ENCODE measurements at regions of chr14 and their contacts with region 1.

Region 1: GRCh38 chr14:33792720-33793368 is 158.0 kb downstream of the EGLN3 start:
- DNase-seq: peak; percentile 58
- H3K4me3 ChIP-seq: no peak overlapping the region
- H3K27ac ChIP-seq: no peak overlapping the region
- H3K4me1 ChIP-seq: no peaks in the 10 kb centered on the region
- CTCF ChIP-seq: peak; percentile 97

Region 2: DNA sequence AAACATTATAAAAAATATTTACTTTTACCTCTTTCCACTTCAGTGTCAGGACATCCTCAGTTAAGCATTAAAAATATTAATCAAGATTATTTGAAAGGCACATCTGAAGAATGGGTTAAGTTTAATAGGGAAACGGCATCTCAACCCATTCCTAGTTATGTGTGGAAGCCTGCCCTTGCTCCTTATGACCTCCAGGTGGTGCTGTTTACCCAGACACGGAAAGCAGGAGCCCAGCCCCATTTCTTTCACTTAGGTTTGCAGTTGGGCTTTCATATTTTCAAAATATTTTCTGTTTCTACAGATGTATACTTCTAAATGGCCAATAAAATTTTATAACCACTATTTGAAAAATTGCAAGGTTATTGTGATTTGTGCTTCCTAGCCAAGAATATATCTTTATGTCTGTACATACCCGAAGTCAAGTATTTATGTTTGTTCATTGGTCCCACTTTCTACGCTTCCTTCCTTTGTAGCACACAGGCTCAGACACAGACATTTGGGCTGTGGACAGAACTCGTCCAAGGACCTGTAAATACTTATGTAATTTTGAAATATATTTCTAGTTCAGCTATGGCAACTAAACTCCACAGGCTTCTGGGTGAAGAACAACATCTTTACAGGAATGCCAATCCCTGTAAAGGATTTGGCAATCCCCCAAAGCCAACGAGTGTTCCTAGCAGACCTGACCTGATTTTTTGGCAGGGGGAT is 1216.6 kb before region 1 on chr14:
- CTCF ChIA-PET with region 1: no interaction called
- POLR2A ChIA-PET with region 1: no interaction called
- intact Hi-C with region 1: loop called (anchors 2 kb)
- DNase-seq: peak; percentile 51
- H3K4me3 ChIP-seq: no peak overlapping the region
- H3K27ac ChIP-seq: no peak overlapping the region
- H3K4me1 ChIP-seq: no peaks in the 10 kb centered on the region
- CTCF ChIP-seq: peak; percentile 98

Region 3: GRCh38 chr14:32710731-32711680 is 1081.8 kb before region 1 on chr14:
- CTCF ChIA-PET with region 1: no interaction called
- POLR2A ChIA-PET with region 1: no interaction called
- intact Hi-C with region 1: loop called (anchors 5 kb)
- DNase-seq: peak; percentile 60
- H3K4me3 ChIP-seq: no peak overlapping the region
- H3K27ac ChIP-seq: no peak overlapping the region
- H3K4me1 ChIP-seq: no peaks in the 10 kb centered on the region
- CTCF ChIP-seq: peak; percentile 88

Region 4: GRCh38 chr14:33475623-33476022 is 317.2 kb before region 1 on chr14:
- CTCF ChIA-PET with region 1: no interaction called
- POLR2A ChIA-PET with region 1: no interaction called
- intact Hi-C with region 1: loop called (anchors 10 kb)
- DNase-seq: peak; percentile 11
- H3K4me3 ChIP-seq: no peak overlapping the region
- H3K27ac ChIP-seq: no peak overlapping the region
- H3K4me1 ChIP-seq: no peaks in the 10 kb centered on the region
- CTCF ChIP-seq: peak; percentile 67

Region 5: DNA sequence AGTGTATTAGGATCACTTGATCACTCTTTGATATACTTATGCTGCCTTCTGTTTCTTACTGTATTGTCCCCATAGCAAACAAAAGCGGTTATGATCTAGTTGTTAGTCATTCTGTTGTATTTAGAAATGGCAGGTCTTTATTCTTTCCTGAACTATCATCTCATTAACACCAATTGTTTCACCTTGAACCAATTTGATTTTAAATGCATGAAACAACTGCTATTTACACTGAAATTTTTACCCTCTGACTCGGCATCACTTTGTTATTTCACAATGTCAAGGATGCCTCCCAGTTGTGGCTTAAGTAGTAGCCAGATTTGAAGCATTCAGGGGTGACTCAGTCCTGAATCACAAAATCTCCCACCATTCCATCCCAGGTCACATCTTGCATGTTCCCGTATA is 145.5 kb before region 1 on chr14:
- CTCF ChIA-PET with region 1: no interaction called
- POLR2A ChIA-PET with region 1: no interaction called
- intact Hi-C with region 1: no loop called
- DNase-seq: no peak
- H3K4me3 ChIP-seq: no peak overlapping the region
- H3K27ac ChIP-seq: no peak overlapping the region
- H3K4me1 ChIP-seq: no peaks in the 10 kb centered on the region
- CTCF ChIP-seq: no peak

Region 6: DNA sequence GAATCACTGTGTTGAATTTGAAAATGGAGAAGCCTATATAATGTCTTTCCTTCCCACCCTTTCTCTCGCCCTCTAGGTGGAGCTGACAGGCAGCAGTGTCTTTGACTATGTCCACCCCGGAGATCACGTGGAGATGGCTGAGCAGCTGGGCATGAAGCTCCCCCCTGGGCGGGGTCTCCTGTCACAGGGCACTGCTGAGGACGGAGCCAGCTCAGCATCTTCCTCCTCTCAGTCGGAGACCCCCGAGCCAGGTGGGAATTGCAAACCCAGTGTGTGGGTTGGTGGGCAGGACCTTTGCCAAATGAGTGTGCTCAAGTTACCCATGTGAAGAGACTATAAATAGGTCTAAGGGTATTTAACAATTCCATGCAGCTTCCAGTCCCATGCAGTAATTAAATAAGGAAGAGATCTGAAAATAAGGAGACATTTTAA is 116.7 kb before region 1 on chr14:
- CTCF ChIA-PET with region 1: no interaction called
- POLR2A ChIA-PET with region 1: no interaction called
- intact Hi-C with region 1: loop called (anchors 5 kb)
- DNase-seq: no peak
- H3K4me3 ChIP-seq: no peak overlapping the region
- H3K27ac ChIP-seq: no peak overlapping the region
- H3K4me1 ChIP-seq: no peaks in the 10 kb centered on the region
- CTCF ChIP-seq: peak; percentile 52; the same call in 1 of the 2 replicates

Region 7: DNA sequence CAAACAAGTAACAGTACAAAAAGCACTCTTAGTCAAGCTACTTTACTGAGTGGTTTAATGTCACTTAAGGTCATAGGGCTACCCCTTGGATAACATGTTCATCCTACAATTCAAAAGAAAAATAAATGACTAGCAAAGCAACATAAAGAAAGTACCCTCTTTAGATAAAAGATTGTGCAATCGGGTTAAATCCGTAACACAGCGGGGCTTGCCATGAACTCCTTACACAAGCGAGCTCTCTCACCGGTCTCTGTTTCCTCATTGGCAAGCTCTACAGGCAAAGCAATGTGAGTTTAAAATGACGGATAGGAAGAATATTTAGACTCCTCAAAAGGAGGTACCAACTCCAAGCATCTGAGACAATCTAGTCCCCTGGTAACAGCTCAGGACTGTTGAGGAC is 17.5 kb after region 1 on chr14:
- CTCF ChIA-PET with region 1: no interaction called
- POLR2A ChIA-PET with region 1: no interaction called
- intact Hi-C with region 1: no loop called
- DNase-seq: no peak
- H3K4me3 ChIP-seq: no peak overlapping the region
- H3K27ac ChIP-seq: no peak overlapping the region
- H3K4me1 ChIP-seq: no peaks in the 10 kb centered on the region
- CTCF ChIP-seq: no peak

Region 8: DNA sequence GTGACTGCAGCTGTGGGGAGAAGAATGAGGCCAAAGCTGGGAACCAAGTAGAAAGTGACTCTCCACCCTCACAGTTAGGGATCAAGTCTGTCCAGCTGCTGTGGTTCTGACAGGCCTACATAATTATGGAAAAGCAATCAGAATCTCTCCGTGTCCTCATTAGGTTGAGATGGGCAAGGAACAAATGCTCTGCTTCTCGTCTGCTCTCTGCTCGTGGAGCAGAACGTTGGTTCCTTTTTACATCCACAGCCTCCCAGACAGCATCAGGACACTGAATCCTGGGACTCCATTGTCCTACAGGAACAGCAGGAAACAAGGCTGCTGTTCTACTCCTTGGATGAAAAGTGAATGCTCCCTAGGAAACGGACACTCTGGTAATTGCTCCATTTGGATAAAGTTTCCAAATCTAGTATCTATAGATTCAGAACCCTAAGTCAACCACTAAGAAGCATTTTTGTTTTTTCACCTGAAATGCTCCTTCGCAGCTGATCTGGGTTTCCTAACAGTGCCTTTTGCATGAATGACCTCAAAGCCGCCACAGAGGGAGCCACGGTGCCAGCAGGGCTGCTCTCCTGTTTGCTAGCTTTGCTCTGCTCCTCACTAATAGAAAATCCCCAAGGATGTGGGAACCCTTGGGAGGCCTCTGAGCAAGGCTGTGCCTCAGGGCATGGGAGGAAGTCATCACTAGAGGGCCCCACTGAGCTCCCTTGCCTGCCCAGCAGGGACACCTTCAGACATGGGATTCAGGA is 56.0 kb after region 1 on chr14:
- CTCF ChIA-PET with region 1: no interaction called
- POLR2A ChIA-PET with region 1: no interaction called
- intact Hi-C with region 1: no loop called
- DNase-seq: peak; percentile 7
- H3K4me3 ChIP-seq: no peak overlapping the region
- H3K27ac ChIP-seq: no peak overlapping the region
- H3K4me1 ChIP-seq: no peaks in the 10 kb centered on the region
- CTCF ChIP-seq: peak; percentile 63